Activated B cell treated with CpG ODN at 0.5 μM for 24 hours (primary cell): ENCODE measurements at regions of chr1 and their contacts with region 1.

Region 1: DNA sequence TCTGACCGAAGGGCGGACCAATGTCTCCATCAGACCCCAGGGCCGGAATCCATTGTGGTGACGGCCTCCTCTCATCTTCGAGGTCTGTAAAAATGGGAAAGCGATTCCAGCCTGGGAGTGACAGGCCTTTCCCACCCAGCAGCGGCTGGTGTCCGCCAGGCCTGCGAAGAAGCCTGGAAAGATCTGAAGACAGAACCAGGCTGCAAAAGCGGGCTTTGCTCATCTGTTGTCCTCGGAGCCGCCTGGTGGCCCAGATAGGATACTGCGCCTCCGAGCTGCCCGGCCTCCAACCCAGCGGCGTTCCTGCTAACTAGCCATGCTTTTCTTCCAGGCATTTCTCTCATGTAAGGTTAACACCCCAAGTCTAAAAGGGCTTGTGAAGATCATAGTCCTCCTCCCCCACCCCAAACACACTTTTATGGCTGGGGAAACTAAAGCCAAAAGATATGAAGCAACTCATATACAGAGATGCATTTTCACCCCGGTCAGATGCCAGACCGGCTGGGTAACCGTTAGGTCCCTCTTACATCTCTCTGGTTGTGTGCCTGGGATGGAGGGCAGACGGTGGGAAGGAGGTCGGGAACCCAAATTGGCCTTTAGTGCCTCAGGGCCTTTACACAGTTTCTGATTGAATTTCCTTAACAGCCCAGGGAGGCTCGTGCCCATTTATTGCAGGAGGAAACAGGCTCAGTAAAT is 1.9 kb upstream of the DHRS3 start:
- DNase-seq: peak; percentile 63
- ATAC-seq: peak; percentile 74
- H3K4me3 Mint-ChIP-seq: peak overlapping the region; percentile 82
- H3K27ac Mint-ChIP-seq: no peak overlapping the region
- H3K4me1 Mint-ChIP-seq: peaks cover 43% of the 10 kb centered on the region
- H3K27me3 Mint-ChIP-seq: peaks cover 47% of the 10 kb centered on the region
- CTCF ChIP-seq: no peak

Region 2: GRCh38 chr1:12113433-12114339 is 506.3 kb before region 1 on chr1:
- CTCF ChIA-PET with region 1: no interaction called
- POLR2A ChIA-PET with region 1: interaction called, 7 read pairs
- intact Hi-C with region 1: loop called (anchors 1 kb)
- DNase-seq: no peak
- ATAC-seq: no peak
- H3K4me3 Mint-ChIP-seq: no peak overlapping the region
- H3K27ac Mint-ChIP-seq: no peak overlapping the region
- H3K4me1 Mint-ChIP-seq: peaks cover 2% of the 10 kb centered on the region
- H3K27me3 Mint-ChIP-seq: no peaks in the 10 kb centered on the region
- CTCF ChIP-seq: no peak

Region 3: GRCh38 chr1:12275369-12275768 is 344.6 kb before region 1 on chr1:
- CTCF ChIA-PET with region 1: interaction called, 18 read pairs
- POLR2A ChIA-PET with region 1: no interaction called
- intact Hi-C with region 1: loop called (anchors 1 kb)
- DNase-seq: no peak
- ATAC-seq: no peak
- H3K4me3 Mint-ChIP-seq: no peak overlapping the region
- H3K27ac Mint-ChIP-seq: no peak overlapping the region
- H3K4me1 Mint-ChIP-seq: no peaks in the 10 kb centered on the region
- H3K27me3 Mint-ChIP-seq: no peaks in the 10 kb centered on the region
- CTCF ChIP-seq: no peak

Region 4: GRCh38 chr1:12314333-12314903 is 305.5 kb before region 1 on chr1:
- CTCF ChIA-PET with region 1: interaction called, 13 read pairs
- POLR2A ChIA-PET with region 1: no interaction called
- intact Hi-C with region 1: loop called (anchors 1 kb)
- DNase-seq: no peak
- ATAC-seq: no peak
- H3K4me3 Mint-ChIP-seq: no peak overlapping the region
- H3K27ac Mint-ChIP-seq: no peak overlapping the region
- H3K4me1 Mint-ChIP-seq: no peaks in the 10 kb centered on the region
- H3K27me3 Mint-ChIP-seq: no peaks in the 10 kb centered on the region
- CTCF ChIP-seq: no peak

Region 5: DNA sequence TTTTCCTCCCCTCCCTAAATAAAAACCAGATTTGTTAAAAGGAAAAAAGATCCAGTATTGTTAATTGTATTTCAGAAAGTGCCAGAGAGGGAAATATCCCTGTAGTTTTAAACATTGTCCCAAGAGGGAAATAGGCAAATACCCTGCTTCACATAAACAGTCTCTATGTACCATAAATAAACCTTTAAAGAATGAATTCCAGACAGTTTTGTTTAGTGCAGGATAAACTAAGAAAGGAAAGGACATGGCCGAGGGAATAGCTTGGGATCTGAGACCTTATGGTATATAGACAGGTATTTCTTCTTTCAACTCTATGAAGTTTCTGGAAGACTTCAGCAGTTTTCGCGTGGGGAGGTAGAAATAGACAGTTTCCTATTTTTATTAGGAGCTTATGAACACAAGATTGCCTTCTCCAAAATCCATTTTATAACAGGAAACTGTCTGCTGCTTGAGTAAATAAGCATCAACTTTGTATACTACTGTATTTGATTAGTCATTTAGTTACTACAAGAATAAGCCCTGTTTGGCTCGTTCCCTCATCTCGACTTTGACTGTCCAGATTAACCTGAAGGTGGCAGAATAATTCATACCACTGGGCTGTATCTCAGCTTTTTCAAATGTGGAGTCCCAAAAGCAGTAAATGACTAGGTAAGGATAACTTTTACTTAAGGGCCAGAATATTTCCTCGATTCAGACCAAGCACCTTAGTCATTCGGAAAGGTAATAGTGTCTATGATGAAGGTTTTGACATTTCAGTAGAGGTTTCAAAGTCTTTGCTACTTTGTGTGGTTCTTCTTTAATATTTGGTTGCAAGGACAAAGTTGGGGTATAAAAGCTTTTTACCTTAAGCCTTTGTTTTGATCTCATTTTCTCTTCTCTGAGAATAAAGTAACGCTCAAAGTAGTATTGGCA is 212.6 kb before region 1 on chr1:
- CTCF ChIA-PET with region 1: interaction called, 4 read pairs
- POLR2A ChIA-PET with region 1: no interaction called
- intact Hi-C with region 1: loop called (anchors 2 kb)
- DNase-seq: no peak
- ATAC-seq: no peak
- H3K4me3 Mint-ChIP-seq: no peak overlapping the region
- H3K27ac Mint-ChIP-seq: no peak overlapping the region
- H3K4me1 Mint-ChIP-seq: peaks cover 2% of the 10 kb centered on the region
- H3K27me3 Mint-ChIP-seq: no peaks in the 10 kb centered on the region
- CTCF ChIP-seq: no peak

Region 6: GRCh38 chr1:12472798-12473551 is 147.0 kb before region 1 on chr1:
- CTCF ChIA-PET with region 1: no interaction called
- POLR2A ChIA-PET with region 1: no interaction called
- intact Hi-C with region 1: loop called (anchors 2 kb)
- DNase-seq: no peak
- ATAC-seq: peak; percentile 84
- H3K4me3 Mint-ChIP-seq: peak overlapping the region; percentile 73
- H3K27ac Mint-ChIP-seq: peak overlapping the region; percentile 95
- H3K4me1 Mint-ChIP-seq: peaks cover 69% of the 10 kb centered on the region
- H3K27me3 Mint-ChIP-seq: no peaks in the 10 kb centered on the region
- CTCF ChIP-seq: no peak

Region 7: GRCh38 chr1:12600880-12601633 is 18.9 kb before region 1 on chr1:
- CTCF ChIA-PET with region 1: interaction called, 4 read pairs
- POLR2A ChIA-PET with region 1: no interaction called
- intact Hi-C with region 1: loop called (anchors 1 kb)
- DNase-seq: no peak
- ATAC-seq: no peak
- H3K4me3 Mint-ChIP-seq: no peak overlapping the region
- H3K27ac Mint-ChIP-seq: no peak overlapping the region
- H3K4me1 Mint-ChIP-seq: peaks cover 2% of the 10 kb centered on the region
- H3K27me3 Mint-ChIP-seq: peaks cover 6% of the 10 kb centered on the region
- CTCF ChIP-seq: no peak